AG04450 (cell line): ENCODE measurements at regions of chr4 and their contacts with region 1.

Region 1: GRCh38 chr4:119683518-119683917 is 54.9 kb upstream of the PDE5A start:
- DNase-seq: peak; percentile 72
- H3K4me3 ChIP-seq: no peak overlapping the region
- H3K27ac ChIP-seq: no peak overlapping the region
- H3K27me3 ChIP-seq: no peaks in the 10 kb centered on the region
- CTCF ChIP-seq: no peak

Region 2: DNA sequence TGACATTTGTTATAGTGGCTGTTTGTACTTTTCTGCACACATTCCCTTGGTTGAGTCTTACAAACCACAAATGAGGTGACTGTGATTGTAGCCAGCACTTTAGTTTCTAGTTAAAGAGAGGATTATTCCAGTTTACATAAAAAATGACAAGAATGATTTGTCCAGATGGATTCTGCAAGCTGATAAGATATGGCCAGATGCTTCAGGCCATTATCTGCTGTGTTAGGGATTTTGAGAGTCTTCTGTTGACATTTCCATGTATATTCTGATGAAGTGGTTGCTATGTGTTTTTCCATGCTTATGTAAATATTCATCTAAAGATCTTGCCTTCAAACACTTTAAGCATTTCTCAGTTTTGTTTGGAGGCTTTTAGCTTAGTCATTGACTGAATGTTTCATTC is 23.9 kb before region 1 on chr4:
- CTCF ChIA-PET with region 1: interaction called, 4 read pairs
- POLR2A ChIA-PET with region 1: interaction called, 11 read pairs
- DNase-seq: no peak
- H3K4me3 ChIP-seq: no peak overlapping the region
- H3K27ac ChIP-seq: no peak overlapping the region
- H3K27me3 ChIP-seq: no peaks in the 10 kb centered on the region
- CTCF ChIP-seq: no peak

Region 3: DNA sequence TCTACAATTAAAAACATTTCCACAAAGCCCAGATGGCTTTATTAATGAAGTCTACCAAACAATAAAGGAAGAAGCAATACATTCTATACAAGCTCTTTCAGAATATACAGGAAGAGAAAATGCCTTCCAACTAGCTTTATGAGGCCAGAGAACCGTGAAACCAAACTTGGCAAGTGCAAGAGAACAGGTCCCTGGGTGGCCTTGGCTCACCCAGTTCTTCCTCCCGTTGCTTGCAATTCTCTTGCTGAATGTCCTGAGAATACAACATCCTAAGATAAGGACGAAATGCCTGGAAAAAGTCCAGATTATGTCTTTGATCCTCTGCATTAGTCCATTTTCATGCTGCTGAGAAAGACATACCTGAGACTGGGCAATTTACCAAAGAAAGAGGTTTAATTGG is 178.2 kb after region 1 on chr4:
- CTCF ChIA-PET with region 1: no interaction called
- POLR2A ChIA-PET with region 1: no interaction called
- DNase-seq: no peak
- H3K4me3 ChIP-seq: no peak overlapping the region
- H3K27ac ChIP-seq: no peak overlapping the region
- H3K27me3 ChIP-seq: no peaks in the 10 kb centered on the region
- CTCF ChIP-seq: no peak